ENCODE measurements at regions of chr18 and their contacts with region 1.

Region 1: DNA sequence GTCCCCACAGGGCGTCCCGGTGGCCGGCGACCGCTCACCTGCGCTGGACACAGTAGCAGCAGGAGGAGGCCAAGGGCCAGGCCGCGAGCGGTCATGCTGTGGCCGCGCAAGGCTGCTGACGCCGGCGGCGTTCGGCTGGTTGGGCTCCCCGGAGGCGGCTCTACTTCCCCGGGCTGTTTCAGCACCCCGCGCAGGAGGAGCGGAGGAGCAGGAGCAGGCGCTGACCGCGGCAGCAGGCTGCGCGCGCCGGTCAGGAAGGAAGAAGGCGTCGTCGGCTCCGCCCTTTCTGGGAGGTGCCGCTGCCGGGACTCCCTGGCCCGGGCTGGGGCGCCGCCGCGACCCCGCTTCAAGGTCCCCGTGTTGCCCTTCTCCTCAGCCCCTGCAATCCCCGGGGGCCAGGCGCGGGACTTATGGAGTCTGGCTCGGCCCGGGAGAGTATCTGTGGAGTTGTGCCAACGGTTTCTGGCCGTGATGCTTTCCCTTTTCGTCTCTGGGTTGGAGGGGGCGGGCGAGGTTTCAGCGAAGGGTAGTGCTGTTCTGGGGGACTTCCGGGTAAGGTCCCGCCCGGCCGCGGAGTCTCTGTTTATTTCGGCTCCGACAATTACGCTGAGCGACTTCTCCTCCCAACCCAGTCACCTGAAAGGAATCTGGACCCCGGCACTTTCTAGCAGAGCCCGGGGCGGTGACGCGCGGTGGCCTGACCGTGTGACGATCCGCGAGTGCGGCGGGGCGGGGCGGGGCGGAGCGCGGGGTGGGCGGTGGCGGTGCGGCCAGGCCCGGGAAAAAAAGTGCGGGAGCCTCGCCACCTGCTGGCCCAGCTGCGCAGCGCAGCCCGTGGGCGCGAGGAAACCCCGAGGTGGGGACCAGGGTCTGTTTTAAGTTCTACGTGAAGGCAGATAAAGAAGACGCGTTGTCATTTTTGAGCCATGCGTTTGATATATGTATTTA is at the start of gene NPC1:
- DNase-seq: peak; percentile 93 to 97 (median 94)
- ATAC-seq: peak; percentile 97
- H3K4me3 ChIP-seq: peak within 1 kb of the TSS; percentile 93
- H3K27ac ChIP-seq: peak within 1 kb of the TSS; percentile 97
- H3K4me1 ChIP-seq: peaks cover 8 to 11% of the 10 kb centered on the region in 2 experiments; a peak in 4 of 5 replicates
- H3K27me3 ChIP-seq: peaks cover 10 to 19% of the 10 kb centered on the region in 2 experiments; a peak in 3 of 5 replicates
- CTCF ChIP-seq: peak; percentile 86 to 90 (median 88)
- EP300 ChIP-seq: peak; percentile 27; the same call in 1 of the 2 replicates
- POLR2A ChIP-seq: peak; percentile 97
- RAD21 ChIP-seq: peak; percentile 82
- polyA plus RNA-seq, gene NPC1: 17.1 to 19.1 TPM

Region 2: GRCh38 chr18:23515911-23516546 is 70.5 kb before region 1 on chr18:
- CTCF ChIA-PET with region 1: interaction called, 24 read pairs
- POLR2A ChIA-PET with region 1: no interaction called
- in situ Hi-C with region 1: loop called (anchors 5 kb)
- intact Hi-C with region 1: loop called (anchors 1 kb)
- DNase-seq: peak; percentile 78 to 90 (median 80)
- ATAC-seq: peak; percentile 100
- H3K4me3 ChIP-seq: no peak overlapping the region
- H3K27ac ChIP-seq: no peak overlapping the region
- H3K4me1 ChIP-seq: no peaks in the 10 kb centered on the region; a peak in 1 of 5 replicates
- H3K27me3 ChIP-seq: no peaks in the 10 kb centered on the region
- CTCF ChIP-seq: peak; percentile 92 to 99 (median 93)
- EP300 ChIP-seq: no peak
- POLR2A ChIP-seq: no peak
- RAD21 ChIP-seq: peak; percentile 83 to 90

Region 3: GRCh38 chr18:23529597-23529996 is 56.9 kb before region 1 on chr18:
- CTCF ChIA-PET with region 1: no interaction called
- POLR2A ChIA-PET with region 1: interaction called, 3 read pairs
- in situ Hi-C with region 1: no loop called
- intact Hi-C with region 1: loop called (anchors 2 kb)
- DNase-seq: peak; percentile 68 to 72 (median 72)
- ATAC-seq: peak; percentile 66
- H3K4me3 ChIP-seq: no peak overlapping the region
- H3K27ac ChIP-seq: peak overlapping the region; percentile 95; the same call in 2 of the 3 replicates
- H3K4me1 ChIP-seq: peaks cover 14 to 28% of the 10 kb centered on the region in 2 experiments
- H3K27me3 ChIP-seq: no peaks in the 10 kb centered on the region
- CTCF ChIP-seq: no peak
- EP300 ChIP-seq: no peak; the same call in 1 of the 2 replicates
- POLR2A ChIP-seq: no peak
- RAD21 ChIP-seq: no peak

Region 4: DNA sequence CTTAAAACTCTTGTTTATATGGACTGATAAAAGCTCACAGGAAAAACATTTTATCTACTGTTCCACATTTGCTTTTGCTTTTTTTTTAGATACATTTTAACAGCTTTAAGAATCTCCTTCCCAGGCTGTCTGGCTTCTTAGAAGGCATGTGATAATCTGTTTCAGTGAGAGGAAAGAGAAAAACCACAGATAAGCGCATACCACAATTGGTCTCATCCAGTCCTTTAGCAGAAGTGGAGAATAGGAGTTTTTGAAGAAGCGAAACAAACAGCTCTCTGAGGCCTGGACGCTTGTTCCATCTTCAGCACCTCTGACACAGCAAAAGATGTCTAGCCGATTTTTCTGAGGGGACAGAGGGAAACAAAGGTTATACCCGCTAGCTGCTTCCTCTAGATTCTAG is 45.7 kb before region 1 on chr18:
- CTCF ChIA-PET with region 1: no interaction called
- POLR2A ChIA-PET with region 1: no interaction called
- in situ Hi-C with region 1: no loop called
- intact Hi-C with region 1: loop called (anchors 2 kb)
- DNase-seq: peak in 2 of 4 experiments; percentile 61 to 75
- ATAC-seq: peak; percentile 88
- H3K4me3 ChIP-seq: no peak overlapping the region
- H3K27ac ChIP-seq: no peak overlapping the region; the same call in 2 of the 3 replicates
- H3K4me1 ChIP-seq: peaks cover 5 to 18% of the 10 kb centered on the region in 2 experiments
- H3K27me3 ChIP-seq: no peaks in the 10 kb centered on the region
- CTCF ChIP-seq: no peak
- EP300 ChIP-seq: peak; percentile 74
- POLR2A ChIP-seq: no peak
- RAD21 ChIP-seq: peak in 1 of 2 experiments; percentile 12; a peak in 2 of 4 replicates

Region 5: GRCh38 chr18:25019086-25019860 is 1432.8 kb after region 1 on chr18:
- CTCF ChIA-PET with region 1: no interaction called
- POLR2A ChIA-PET with region 1: no interaction called
- in situ Hi-C with region 1: no loop called
- intact Hi-C with region 1: no loop called
- DNase-seq: no peak
- ATAC-seq: no peak
- H3K4me3 ChIP-seq: no peak overlapping the region
- H3K27ac ChIP-seq: no peak overlapping the region
- H3K4me1 ChIP-seq: 0 out of 5 replicates have a peak, but pooled peaks cover 0 to 4% of the 10 kb centered on the region in 2 experiments
- H3K27me3 ChIP-seq: no peaks in the 10 kb centered on the region
- CTCF ChIP-seq: no peak
- EP300 ChIP-seq: no peak
- POLR2A ChIP-seq: no peak
- RAD21 ChIP-seq: no peak